ENCODE measurements at regions of chr12 and their contacts with region 1.

Region 1: GRCh38 chr12:38921025-38921677 is 15.8 kb upstream of the CPNE8 start:
- DNase-seq: peak; percentile 61 to 90 (median 73)
- H3K4me3 ChIP-seq: no peak overlapping the region
- H3K27ac ChIP-seq: no peak overlapping the region
- H3K4me1 ChIP-seq: no peaks in the 10 kb centered on the region
- H3K27me3 ChIP-seq: no peaks in the 10 kb centered on the region
- CTCF ChIP-seq: peak; percentile 42 to 62 (median 62)
- POLR2A ChIP-seq: no peak

Region 2: GRCh38 chr12:39012870-39013269 is 91.7 kb after region 1 on chr12:
- intact Hi-C with region 1: no loop called
- DNase-seq: no peak
- H3K4me3 ChIP-seq: no peak overlapping the region
- H3K27ac ChIP-seq: no peak overlapping the region
- H3K4me1 ChIP-seq: no peaks in the 10 kb centered on the region
- H3K27me3 ChIP-seq: no peaks in the 10 kb centered on the region
- CTCF ChIP-seq: no peak
- POLR2A ChIP-seq: no peak

Region 3: GRCh38 chr12:39095636-39096330 is 174.6 kb after region 1 on chr12:
- intact Hi-C with region 1: loop called (anchors 5 to 10 kb)
- DNase-seq: no peak
- H3K4me3 ChIP-seq: no peak overlapping the region
- H3K27ac ChIP-seq: no peak overlapping the region
- H3K4me1 ChIP-seq: no peaks in the 10 kb centered on the region
- H3K27me3 ChIP-seq: no peaks in the 10 kb centered on the region
- CTCF ChIP-seq: no peak
- POLR2A ChIP-seq: no peak

Region 4: DNA sequence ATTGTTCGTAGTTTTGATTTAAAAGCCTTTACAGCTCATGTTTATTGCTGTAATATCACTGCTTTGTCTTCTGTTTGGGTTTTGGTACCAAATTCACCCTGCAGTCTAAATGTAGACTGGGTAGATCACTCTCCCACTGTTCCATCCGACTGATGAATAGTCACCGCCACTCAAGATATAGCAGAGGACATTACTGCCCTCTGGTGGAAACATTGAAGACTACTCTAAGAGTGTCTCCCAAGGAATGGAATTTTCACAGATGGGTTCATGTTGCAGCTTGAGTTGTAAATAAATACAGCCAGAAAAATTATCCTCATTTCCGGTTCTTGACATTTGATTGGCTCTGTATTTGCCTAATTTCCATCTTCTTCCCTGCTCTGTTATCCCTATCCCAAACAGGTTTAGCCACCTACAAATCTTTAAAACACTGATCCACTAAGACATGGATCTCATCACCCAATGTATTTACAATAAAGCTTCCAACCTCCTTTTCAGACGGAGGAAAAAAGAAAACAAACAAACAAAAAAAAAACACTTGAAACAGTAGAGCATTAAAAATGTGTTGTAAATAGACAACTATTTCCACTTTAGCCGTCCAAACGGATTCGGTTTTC is 182.5 kb after region 1 on chr12:
- intact Hi-C with region 1: loop called (anchors 5 to 10 kb)
- DNase-seq: peak in 5 of 7 donors; percentile 32 to 40 (median 35)
- H3K4me3 ChIP-seq: no peak overlapping the region
- H3K27ac ChIP-seq: no peak overlapping the region
- H3K4me1 ChIP-seq: peaks cover 5 to 8% of the 10 kb centered on the region in 2 donors
- H3K27me3 ChIP-seq: no peaks in the 10 kb centered on the region
- CTCF ChIP-seq: peak; percentile 70 to 90 (median 82)
- POLR2A ChIP-seq: no peak

Region 5: GRCh38 chr12:39272871-39273770 is 352.0 kb after region 1 on chr12:
- intact Hi-C with region 1: loop called in 1 of 2 experiments (anchors 10 kb)
- DNase-seq: peak in 5 of 7 donors; percentile 24 to 45 (median 37)
- H3K4me3 ChIP-seq: no peak overlapping the region
- H3K27ac ChIP-seq: no peak overlapping the region
- H3K4me1 ChIP-seq: no peaks in the 10 kb centered on the region
- H3K27me3 ChIP-seq: no peaks in the 10 kb centered on the region
- CTCF ChIP-seq: peak in 5 of 6 experiments; percentile 36 to 84 (median 57)
- POLR2A ChIP-seq: no peak

Region 6: GRCh38 chr12:39329018-39329417 is 407.9 kb after region 1 on chr12:
- intact Hi-C with region 1: no loop called
- DNase-seq: no peak
- H3K4me3 ChIP-seq: no peak overlapping the region
- H3K27ac ChIP-seq: no peak overlapping the region
- H3K4me1 ChIP-seq: no peaks in the 10 kb centered on the region
- H3K27me3 ChIP-seq: no peaks in the 10 kb centered on the region
- CTCF ChIP-seq: no peak
- POLR2A ChIP-seq: no peak

Measured in adrenal gland (tissue), 19 donors.